GM12878 (cell line): ENCODE measurements at regions of chr11 and their contacts with region 1.

Region 1: GRCh38 chr11:10455637-10456487 is 798 bp downstream of the AMPD3 start:
- DNase-seq: peak; percentile 43
- ATAC-seq: peak; percentile 71
- H3K4me3 ChIP-seq: peak overlapping the region; percentile 66
- H3K27ac ChIP-seq: peak overlapping the region; percentile 59
- H3K4me1 ChIP-seq: peaks cover 51% of the 10 kb centered on the region
- H3K27me3 ChIP-seq: peaks cover 0 to 2% of the 10 kb centered on the region in 2 experiments; a peak in 3 of 4 replicates
- CTCF ChIP-seq: no peak
- EP300 ChIP-seq: peak in 1 of 2 experiments; percentile 30; a peak in 1 of 4 replicates
- POLR2A ChIP-seq: peak; percentile 59
- RAD21 ChIP-seq: no peak

Region 2: GRCh38 chr11:10350341-10350740 is 105.5 kb before region 1 on chr11:
- CTCF ChIA-PET with region 1: no interaction called
- POLR2A ChIA-PET with region 1: no interaction called
- RAD21 ChIA-PET with region 1: no interaction called
- SMC1A ChIA-PET with region 1: no interaction called
- in situ Hi-C with region 1: no loop called
- intact Hi-C with region 1: no loop called
- DNase-seq: no peak
- ATAC-seq: no peak
- H3K4me3 ChIP-seq: no peak overlapping the region
- H3K27ac ChIP-seq: no peak overlapping the region
- H3K4me1 ChIP-seq: no peaks in the 10 kb centered on the region
- H3K27me3 ChIP-seq: no peaks in the 10 kb centered on the region; a peak in 1 of 4 replicates
- CTCF ChIP-seq: no peak
- EP300 ChIP-seq: no peak
- POLR2A ChIP-seq: no peak
- RAD21 ChIP-seq: no peak

Region 3: DNA sequence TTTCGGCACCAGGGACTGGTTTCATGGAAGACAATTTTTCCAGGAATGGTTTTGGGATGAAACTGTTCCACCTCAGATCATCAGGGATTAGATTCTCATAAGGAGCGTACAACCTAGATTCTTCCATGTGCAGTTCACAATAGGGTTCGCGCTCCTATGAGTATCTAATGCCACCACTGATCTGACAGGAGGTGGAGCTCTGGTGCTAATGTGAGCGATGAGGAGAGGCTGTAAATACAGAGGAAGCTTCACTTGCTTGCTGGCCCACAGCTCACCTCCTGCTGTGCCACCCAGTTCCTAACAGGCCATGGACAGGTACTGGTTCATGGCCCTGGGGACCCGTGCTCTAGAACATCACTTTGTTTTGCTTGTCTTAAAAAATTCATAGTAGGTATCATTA is 42.6 kb before region 1 on chr11:
- CTCF ChIA-PET with region 1: interaction called, 30 read pairs
- POLR2A ChIA-PET with region 1: interaction called, 3 read pairs
- RAD21 ChIA-PET with region 1: interaction called, 10 read pairs
- SMC1A ChIA-PET with region 1: interaction called, 36 read pairs
- in situ Hi-C with region 1: no loop called
- intact Hi-C with region 1: no loop called
- DNase-seq: no peak
- ATAC-seq: peak; percentile 94
- H3K4me3 ChIP-seq: no peak overlapping the region
- H3K27ac ChIP-seq: no peak overlapping the region
- H3K4me1 ChIP-seq: peaks cover 7% of the 10 kb centered on the region; the same call in 1 of the 2 replicates
- H3K27me3 ChIP-seq: no peaks in the 10 kb centered on the region; a peak in 1 of 4 replicates
- CTCF ChIP-seq: peak; percentile 44 to 50 (median 49); a peak in 4 of 6 replicates
- EP300 ChIP-seq: no peak
- POLR2A ChIP-seq: no peak
- RAD21 ChIP-seq: peak; percentile 89

Region 4: DNA sequence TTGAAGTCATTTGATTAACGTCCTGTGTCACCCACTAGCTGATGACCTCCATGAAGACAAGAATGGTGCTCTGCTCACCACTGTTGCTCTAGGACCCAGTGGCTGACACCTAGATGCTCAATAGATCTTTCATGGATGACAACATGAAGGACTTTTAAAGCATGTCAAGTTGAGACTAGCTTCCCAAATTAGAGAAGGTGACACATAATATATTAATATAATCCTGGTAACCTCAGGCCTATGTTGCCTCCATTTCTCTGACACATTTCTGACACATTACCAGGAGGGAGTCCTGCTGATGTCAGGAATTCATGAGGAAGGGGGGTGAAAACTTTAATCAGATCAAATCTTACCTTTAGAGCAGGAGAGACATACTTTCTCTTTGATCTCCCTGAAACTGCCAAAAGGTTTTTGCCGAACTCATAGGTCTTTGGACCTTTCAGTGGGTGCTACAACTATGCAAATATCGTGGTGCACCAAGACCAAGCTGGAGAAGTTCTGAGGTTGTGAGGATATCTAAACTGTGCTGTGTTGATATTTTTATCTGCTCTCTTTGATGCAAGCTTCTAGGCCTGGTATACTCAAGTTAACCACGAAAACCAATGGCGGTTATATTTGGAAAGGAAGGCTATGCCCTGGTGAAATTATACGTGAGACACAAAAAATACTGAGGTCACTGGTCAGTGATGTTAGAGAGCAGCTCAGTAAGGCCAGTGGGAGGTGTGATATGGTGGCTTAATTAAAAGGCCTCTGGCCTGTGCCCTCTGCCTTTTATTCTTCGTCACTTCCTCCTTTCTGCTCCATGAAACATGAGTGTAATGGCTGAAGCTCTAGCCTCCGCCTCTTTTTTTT is 14.0 kb before region 1 on chr11:
- CTCF ChIA-PET with region 1: interaction called, 69 read pairs
- POLR2A ChIA-PET with region 1: interaction called, 21 read pairs
- RAD21 ChIA-PET with region 1: interaction called, 51 read pairs
- SMC1A ChIA-PET with region 1: interaction called, 44 read pairs
- in situ Hi-C with region 1: no loop called
- intact Hi-C with region 1: no loop called
- DNase-seq: peak; percentile 82
- ATAC-seq: peak; percentile 96
- H3K4me3 ChIP-seq: no peak overlapping the region
- H3K27ac ChIP-seq: no peak overlapping the region; the same call in 1 of the 2 replicates
- H3K4me1 ChIP-seq: peaks cover 18% of the 10 kb centered on the region
- H3K27me3 ChIP-seq: peaks cover 0 to 3% of the 10 kb centered on the region in 2 experiments; a peak in 1 of 4 replicates
- CTCF ChIP-seq: no peak
- EP300 ChIP-seq: peak; percentile 72 to 88; a peak in 3 of 4 replicates
- POLR2A ChIP-seq: no peak
- RAD21 ChIP-seq: no peak

Region 5: GRCh38 chr11:10526974-10527918 is 71.4 kb after region 1 on chr11:
- CTCF ChIA-PET with region 1: no interaction called
- POLR2A ChIA-PET with region 1: no interaction called
- RAD21 ChIA-PET with region 1: interaction called, 3 read pairs
- SMC1A ChIA-PET with region 1: interaction called, 5 read pairs
- in situ Hi-C with region 1: no loop called
- intact Hi-C with region 1: loop called (anchors 5 kb)
- DNase-seq: peak; percentile 70
- ATAC-seq: peak; percentile 98
- H3K4me3 ChIP-seq: no peak overlapping the region
- H3K27ac ChIP-seq: no peak overlapping the region
- H3K4me1 ChIP-seq: peaks cover 7% of the 10 kb centered on the region
- H3K27me3 ChIP-seq: no peaks in the 10 kb centered on the region
- CTCF ChIP-seq: no peak
- EP300 ChIP-seq: peak in 1 of 2 experiments; percentile 59; a peak in 1 of 4 replicates
- POLR2A ChIP-seq: no peak
- RAD21 ChIP-seq: no peak

Region 6: DNA sequence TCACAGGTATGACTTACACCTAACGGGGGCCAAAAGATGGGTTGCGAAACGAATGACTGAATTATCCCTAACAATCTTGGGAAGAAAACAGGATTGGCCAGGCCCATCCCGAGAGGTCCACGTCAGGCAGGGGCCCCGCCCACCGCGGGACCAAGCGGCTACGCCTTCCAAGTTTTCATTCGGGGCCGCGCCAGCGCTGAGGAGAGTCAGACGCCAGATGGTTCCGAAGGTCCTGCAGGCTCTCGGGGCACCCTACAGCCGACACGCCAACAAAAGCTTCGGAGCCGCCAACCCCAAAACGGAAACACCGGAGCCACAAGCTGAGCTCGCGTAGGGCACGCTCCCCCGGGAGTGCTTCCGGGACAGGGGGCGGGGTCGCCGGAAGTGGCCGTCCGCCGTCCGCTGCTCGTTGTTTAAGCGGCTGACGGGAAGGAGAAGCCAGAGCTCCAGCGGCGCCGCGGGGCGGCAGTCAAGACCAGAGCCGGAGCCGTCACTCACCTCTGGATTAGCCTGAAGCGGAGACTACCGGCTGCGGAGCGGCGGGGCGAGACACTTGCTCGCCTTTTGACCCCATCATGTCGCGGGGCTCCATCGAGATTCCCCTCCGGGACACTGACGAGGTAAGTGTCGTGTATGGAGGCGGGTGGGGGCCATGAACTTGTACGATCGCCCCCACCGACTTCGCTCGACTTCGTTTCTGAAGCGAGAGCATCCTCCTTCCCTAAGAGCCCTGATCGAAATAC is 295.1 kb after region 1 on chr11 and contains the start of gene CTR9:
- CTCF ChIA-PET with region 1: no interaction called
- POLR2A ChIA-PET with region 1: no interaction called
- RAD21 ChIA-PET with region 1: interaction called, 4 read pairs
- SMC1A ChIA-PET with region 1: no interaction called
- in situ Hi-C with region 1: no loop called
- intact Hi-C with region 1: loop called (anchors 5 kb)
- DNase-seq: peak; percentile 68
- ATAC-seq: peak; percentile 96
- H3K4me3 ChIP-seq: peak within 1 kb of the TSS; percentile 92
- H3K27ac ChIP-seq: peak within 1 kb of the TSS; percentile 93
- H3K4me1 ChIP-seq: peaks cover 3% of the 10 kb centered on the region; the same call in 1 of the 2 replicates
- H3K27me3 ChIP-seq: no peaks in the 10 kb centered on the region
- CTCF ChIP-seq: peak; percentile 20 to 59 (median 44); a peak in 4 of 6 replicates
- EP300 ChIP-seq: no peak
- POLR2A ChIP-seq: peak; percentile 99
- RAD21 ChIP-seq: peak; percentile 43; the same call in 1 of the 2 replicates
- polyA plus RNA-seq, gene CTR9: 13.9 to 24.3 TPM